ENCODE measurements at regions of chr14 and their contacts with region 1.

Region 1: DNA sequence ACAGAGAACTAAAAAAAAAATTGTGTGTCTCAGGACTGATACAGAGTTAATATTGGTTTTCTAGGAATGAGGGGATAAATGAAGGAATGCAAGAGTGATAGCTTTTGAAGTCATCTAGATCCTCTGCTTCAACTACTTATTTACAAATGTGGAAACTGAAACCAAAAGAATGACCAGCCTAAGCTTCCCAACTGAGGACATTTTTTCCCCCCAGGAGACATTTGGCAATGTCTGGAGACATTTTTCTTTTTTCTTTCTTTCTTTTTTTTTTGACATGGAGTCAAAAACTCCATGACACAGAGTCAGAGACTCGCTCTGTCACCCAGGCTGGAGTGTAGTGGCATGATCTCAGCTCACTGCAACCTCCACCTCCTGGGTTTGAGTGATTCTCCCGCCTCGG is 15.3 kb downstream of the DLK1 start:
- DNase-seq: no peak
- ATAC-seq: no peak
- H3K4me3 Mint-ChIP-seq: no peak overlapping the region
- H3K27ac Mint-ChIP-seq: no peak overlapping the region
- H3K4me1 Mint-ChIP-seq: no peaks in the 10 kb centered on the region
- H3K27me3 Mint-ChIP-seq: peaks cover 2% of the 10 kb centered on the region

Region 2: GRCh38 chr14:100780246-100780992 is 38.5 kb after region 1 on chr14:
- CTCF ChIA-PET with region 1: no interaction called
- POLR2A ChIA-PET with region 1: no interaction called
- intact Hi-C with region 1: loop called in 1 of 2 experiments (anchors 2 kb)
- DNase-seq: no peak
- ATAC-seq: no peak
- H3K4me3 Mint-ChIP-seq: no peak overlapping the region
- H3K27ac Mint-ChIP-seq: no peak overlapping the region
- H3K4me1 Mint-ChIP-seq: no peaks in the 10 kb centered on the region
- H3K27me3 Mint-ChIP-seq: peaks cover 2% of the 10 kb centered on the region